K562 (cell line): ENCODE measurements at regions of chr3 and their contacts with region 1.

Region 1: DNA sequence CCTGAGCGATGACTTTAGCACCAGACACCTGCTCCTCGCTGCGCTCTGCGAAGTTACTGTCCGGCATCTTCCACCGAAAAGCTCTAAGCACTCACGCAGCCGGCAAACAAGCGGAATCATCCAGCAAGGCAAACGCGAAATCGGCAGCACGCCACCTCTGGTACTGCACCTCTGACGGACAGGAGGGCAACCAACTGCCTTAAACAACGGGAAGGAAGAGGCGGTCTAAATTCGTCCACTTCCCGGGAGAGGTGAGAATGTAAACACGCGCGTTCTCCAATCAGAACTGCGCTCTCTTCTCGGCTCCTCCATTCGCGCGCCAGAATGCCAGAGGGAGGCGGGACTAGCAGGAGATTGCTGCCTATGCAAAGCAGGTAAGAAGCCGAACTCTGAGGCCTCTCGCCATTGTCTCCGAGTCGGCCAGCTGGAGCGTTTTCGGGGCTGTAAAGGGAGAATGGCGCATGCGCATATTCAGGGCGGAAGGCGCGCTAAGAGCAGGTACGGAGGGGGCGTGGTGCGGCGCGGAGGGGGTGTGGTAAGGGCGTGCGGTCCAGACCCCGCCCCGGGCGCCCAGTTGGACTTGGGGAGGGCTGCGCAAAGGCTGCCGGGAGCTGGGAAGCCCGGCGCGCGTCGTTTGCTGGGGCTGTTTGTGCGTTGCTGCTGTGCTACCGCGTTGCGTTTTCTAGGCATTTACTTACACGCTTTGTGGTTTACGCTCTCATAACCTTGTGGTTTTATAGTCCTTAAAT is at the starts of genes BTD and HACL1:
- DNase-seq: peak; percentile 96 to 99 (median 97)
- ATAC-seq: peak; percentile 97
- H3K4me3 ChIP-seq: peak within 1 kb of the TSS; percentile 73
- H3K27ac ChIP-seq: peak within 1 kb of the TSS; percentile 74
- H3K4me1 ChIP-seq: peaks cover 0 to 5% of the 10 kb centered on the region in 2 experiments; a peak in 2 of 5 replicates
- H3K27me3 ChIP-seq: no peaks in the 10 kb centered on the region
- CTCF ChIP-seq: peak; percentile 24 to 62 (median 62); a peak in 3 of 6 replicates
- EP300 ChIP-seq: no peak; the same call in 1 of the 2 replicates
- POLR2A ChIP-seq: peak; percentile 98
- RAD21 ChIP-seq: peak in 1 of 2 experiments; percentile 29; a peak in 1 of 4 replicates
- polyA plus RNA-seq, gene BTD: 24.3 to 26.2 TPM
- polyA plus RNA-seq, gene HACL1: 39.0 to 54.7 TPM

Region 2: GRCh38 chr3:15585111-15585845 is 16.3 kb before region 1 on chr3:
- CTCF ChIA-PET with region 1: no interaction called
- POLR2A ChIA-PET with region 1: interaction called, 13 read pairs
- in situ Hi-C with region 1: no loop called
- intact Hi-C with region 1: no loop called
- DNase-seq: no peak
- ATAC-seq: no peak
- H3K4me3 ChIP-seq: no peak overlapping the region
- H3K27ac ChIP-seq: no peak overlapping the region
- H3K4me1 ChIP-seq: no peaks in the 10 kb centered on the region
- H3K27me3 ChIP-seq: no peaks in the 10 kb centered on the region
- CTCF ChIP-seq: no peak
- EP300 ChIP-seq: no peak
- POLR2A ChIP-seq: no peak
- RAD21 ChIP-seq: no peak

Region 3: DNA sequence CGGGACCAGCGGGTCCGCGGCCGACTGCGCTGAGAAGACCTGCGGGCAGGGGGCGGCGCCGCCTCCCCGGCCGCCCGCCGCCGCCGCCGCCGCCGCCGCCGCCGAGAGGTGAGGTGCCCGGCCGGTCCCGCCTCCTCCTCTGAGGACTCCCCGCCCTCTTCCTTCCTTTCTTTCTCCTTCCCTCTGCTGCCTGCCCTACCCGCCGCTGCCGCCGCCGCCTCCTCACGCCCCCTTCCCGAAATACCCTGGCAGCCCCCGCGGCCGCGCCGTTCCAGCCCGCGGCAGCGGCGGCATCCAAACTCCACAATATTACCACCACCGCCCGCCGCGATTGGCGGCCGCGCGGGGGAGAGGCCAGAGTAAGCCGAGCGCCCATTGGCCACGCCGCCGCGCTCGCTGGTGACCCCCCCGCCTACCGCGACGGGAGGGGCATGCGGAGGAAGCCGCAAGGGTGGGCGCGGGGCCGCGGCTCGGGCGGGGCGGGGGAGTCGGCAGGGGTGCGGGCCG is 258.0 kb after region 1 on chr3:
- CTCF ChIA-PET with region 1: no interaction called
- POLR2A ChIA-PET with region 1: no interaction called
- in situ Hi-C with region 1: no loop called
- intact Hi-C with region 1: loop called (anchors 5 kb)
- DNase-seq: peak; percentile 95 to 96 (median 96)
- ATAC-seq: peak; percentile 89
- H3K4me3 ChIP-seq: peak overlapping the region; percentile 82
- H3K27ac ChIP-seq: peak overlapping the region; percentile 83
- H3K4me1 ChIP-seq: peaks cover 10 to 30% of the 10 kb centered on the region in 2 experiments
- H3K27me3 ChIP-seq: no peaks in the 10 kb centered on the region
- CTCF ChIP-seq: no peak
- EP300 ChIP-seq: no peak
- POLR2A ChIP-seq: peak; percentile 76
- RAD21 ChIP-seq: no peak

Region 4: DNA sequence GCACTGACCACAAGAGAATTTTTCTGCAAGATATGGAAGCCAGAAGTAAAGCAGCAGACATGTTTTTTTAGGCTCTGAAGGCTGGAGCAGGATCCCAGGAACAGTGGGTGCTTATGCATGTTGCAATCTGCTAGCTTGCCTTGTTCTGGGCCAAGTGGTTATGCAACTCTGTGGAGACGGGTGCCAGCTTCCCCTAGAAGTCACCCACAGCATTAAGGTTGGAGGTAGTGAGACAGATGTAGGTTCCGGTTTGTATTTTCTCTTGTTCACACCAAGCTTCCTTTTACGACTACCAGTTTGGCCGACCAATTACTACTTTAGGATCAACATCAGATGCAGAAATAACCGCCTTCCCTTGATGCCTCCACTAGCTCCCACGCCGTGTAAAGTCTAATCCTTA is 652.0 kb after region 1 on chr3:
- CTCF ChIA-PET with region 1: no interaction called
- POLR2A ChIA-PET with region 1: no interaction called
- in situ Hi-C with region 1: no loop called
- intact Hi-C with region 1: no loop called
- DNase-seq: no peak
- ATAC-seq: no peak
- H3K4me3 ChIP-seq: no peak overlapping the region
- H3K27ac ChIP-seq: no peak overlapping the region
- H3K4me1 ChIP-seq: no peaks in the 10 kb centered on the region
- H3K27me3 ChIP-seq: peaks cover 4 to 19% of the 10 kb centered on the region in 2 experiments; a peak in 3 of 5 replicates
- CTCF ChIP-seq: no peak
- EP300 ChIP-seq: no peak
- POLR2A ChIP-seq: no peak
- RAD21 ChIP-seq: no peak